WTC11 (cell line): ENCODE measurements at regions of chr3 and their contacts with region 1.

Region 1: GRCh38 chr3:21170964-21171363 is 580.0 kb downstream of the ZNF385D start:
- DNase-seq: no peak
- ATAC-seq: peak; percentile 95
- H3K4me3 Mint-ChIP-seq: no peak overlapping the region
- H3K27ac Mint-ChIP-seq: no peak overlapping the region
- H3K4me1 Mint-ChIP-seq: peaks cover 31% of the 10 kb centered on the region
- H3K27me3 Mint-ChIP-seq: no peaks in the 10 kb centered on the region
- CTCF ChIP-seq: peak; percentile 48; the same call in 1 of the 2 replicates

Region 2: DNA sequence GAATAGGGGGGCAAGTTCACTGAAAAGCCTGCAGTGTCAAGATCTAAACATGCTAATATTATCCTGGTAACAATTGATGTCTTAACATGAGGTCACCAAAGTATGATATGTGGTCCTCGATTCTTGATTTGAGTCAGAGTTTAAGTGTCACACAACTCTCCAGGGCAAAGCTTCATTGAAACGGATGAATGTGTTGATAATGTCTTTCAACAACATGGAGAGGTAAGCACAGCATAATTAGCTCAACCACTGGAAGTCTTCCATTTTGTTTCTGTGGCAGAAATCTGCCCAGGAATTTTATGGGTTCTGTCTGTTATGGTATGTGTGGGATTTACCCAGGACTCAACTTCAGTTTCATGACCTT is 11.4 kb before region 1 on chr3:
- CTCF ChIA-PET with region 1: interaction called, 15 read pairs
- POLR2A ChIA-PET with region 1: no interaction called
- DNase-seq: no peak
- ATAC-seq: no peak
- H3K4me3 Mint-ChIP-seq: no peak overlapping the region
- H3K27ac Mint-ChIP-seq: no peak overlapping the region
- H3K4me1 Mint-ChIP-seq: no peaks in the 10 kb centered on the region
- H3K27me3 Mint-ChIP-seq: no peaks in the 10 kb centered on the region; the same call in 1 of the 2 replicates
- CTCF ChIP-seq: no peak